Activated T-helper 1 cell treated with anti-CD3 and anti-CD28 coated beads, Interleukin-12 subunit alpha, Interleukin-12 subunit beta, Interleukin-2, Interleukin-4 antibody, amounts not matched to agents 30 ng/mL and 10 ng/mL and 1 ng/mL, durations not matched to agents 14 hours and 24 hours and 36 hours (primary cell): ENCODE measurements at regions of chr16 and their contacts with region 1.

Region 1: GRCh38 chr16:57416122-57416509 is 11.5 kb downstream of the CCL17 start:
- DNase-seq: no peak
- H3K4me3 Mint-ChIP-seq: no peak overlapping the region
- H3K27ac Mint-ChIP-seq: no peak overlapping the region
- H3K4me1 Mint-ChIP-seq: peaks cover 19% of the 10 kb centered on the region
- H3K27me3 Mint-ChIP-seq: peaks cover 2% of the 10 kb centered on the region

Region 2: DNA sequence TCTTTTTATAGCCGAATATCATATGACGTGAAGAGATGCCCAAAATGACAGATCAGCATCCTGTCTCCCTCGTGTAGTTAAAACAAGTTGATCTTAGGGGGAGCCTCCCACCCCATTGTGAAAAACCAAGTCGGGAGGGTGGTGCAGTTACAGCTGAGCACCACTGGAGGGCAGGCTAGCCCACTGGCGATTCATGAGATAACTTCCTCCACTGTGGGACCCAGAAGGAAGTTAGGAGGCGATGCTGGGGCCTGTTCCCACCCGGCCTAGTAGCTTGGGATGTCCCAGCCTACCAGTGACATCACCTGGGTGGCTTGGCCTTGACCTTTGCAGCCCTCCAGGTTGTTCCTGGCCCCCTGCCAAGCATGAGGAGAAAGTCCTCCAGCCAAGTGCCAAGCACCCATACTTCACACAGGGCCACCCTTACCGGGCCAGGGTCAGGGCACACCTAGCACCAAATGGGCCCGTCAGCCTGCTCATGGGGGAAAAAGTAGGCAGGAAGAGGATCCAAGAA is 331.8 kb before region 1 on chr16:
- intact Hi-C with region 1: loop called (anchors 2 kb)
- DNase-seq: peak; percentile 64
- H3K4me3 Mint-ChIP-seq: no peak overlapping the region
- H3K27ac Mint-ChIP-seq: peak overlapping the region; percentile 71
- H3K4me1 Mint-ChIP-seq: peaks cover 8% of the 10 kb centered on the region
- H3K27me3 Mint-ChIP-seq: no peaks in the 10 kb centered on the region

Region 3: GRCh38 chr16:57427824-57428223 is 11.7 kb after region 1 on chr16:
- intact Hi-C with region 1: no loop called
- DNase-seq: no peak
- H3K4me3 Mint-ChIP-seq: no peak overlapping the region
- H3K27ac Mint-ChIP-seq: no peak overlapping the region
- H3K4me1 Mint-ChIP-seq: no peaks in the 10 kb centered on the region
- H3K27me3 Mint-ChIP-seq: no peaks in the 10 kb centered on the region